OCI-LY7 (cell line): ENCODE measurements at regions of chr11 and their contacts with region 1.

Region 1: GRCh38 chr11:57667736-57668435 is at the start of gene ZDHHC5:
- DNase-seq: peak; percentile 99
- H3K4me3 ChIP-seq: peak within 1 kb of the TSS; percentile 94
- H3K27ac ChIP-seq: peak within 1 kb of the TSS; percentile 88
- H3K4me1 ChIP-seq: peaks cover 23% of the 10 kb centered on the region
- CTCF ChIP-seq: peak; percentile 34
- total RNA-seq, gene ZDHHC5: 23.4 and 27.5 TPM in 2 replicates

Region 2: DNA sequence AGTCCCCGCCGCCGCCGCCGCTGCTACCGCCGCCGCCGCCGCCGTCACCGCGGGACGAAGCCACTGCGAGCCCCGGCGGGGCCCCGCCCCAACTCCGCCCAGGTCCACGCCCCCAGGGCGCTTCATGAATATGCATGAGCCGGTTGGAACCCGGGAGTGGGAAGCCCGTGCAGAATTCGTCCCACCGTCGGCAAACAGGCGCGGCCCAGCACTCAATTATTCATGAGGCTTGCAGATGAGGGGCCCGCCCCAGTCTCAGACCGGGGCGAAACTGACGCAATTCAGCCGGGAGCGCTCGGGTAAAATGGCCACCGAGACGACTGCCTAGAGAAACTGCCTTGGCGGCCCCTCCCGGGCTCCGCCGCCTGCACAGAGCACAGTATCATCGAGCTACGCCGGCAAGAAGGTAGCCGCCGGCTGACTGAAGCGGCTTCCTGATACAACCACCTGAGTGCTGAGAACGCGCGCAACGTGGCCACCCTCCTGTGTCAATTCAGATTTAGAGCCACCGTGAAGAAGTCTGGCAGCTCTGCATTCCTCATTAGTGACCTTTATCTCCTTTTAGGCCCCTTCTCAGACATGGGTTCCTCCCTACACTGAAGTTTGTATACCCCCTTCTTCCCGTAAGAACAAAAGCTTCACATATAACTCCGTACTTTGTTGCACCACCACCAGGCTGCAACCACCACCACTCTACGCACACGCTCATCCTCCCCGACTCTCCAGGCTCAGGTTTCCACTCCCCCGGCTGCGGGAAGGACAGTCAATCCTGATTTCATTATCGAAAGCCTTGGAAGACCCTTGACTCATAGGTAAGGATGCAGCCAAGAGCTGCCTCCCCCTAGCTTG is 342.8 kb before region 1 on chr11 and contains the start of gene TNKS1BP1:
- CTCF ChIA-PET with region 1: no interaction called
- POLR2A ChIA-PET with region 1: no interaction called
- intact Hi-C with region 1: loop called (anchors 5 kb)
- DNase-seq: peak; percentile 96
- H3K4me3 ChIP-seq: peak within 1 kb of the TSS; percentile 70
- H3K27ac ChIP-seq: peak within 1 kb of the TSS; percentile 86
- H3K4me1 ChIP-seq: peaks cover 28% of the 10 kb centered on the region
- CTCF ChIP-seq: no peak
- total RNA-seq, gene TNKS1BP1: 5.3 and 6.4 TPM in 2 replicates

Region 3: DNA sequence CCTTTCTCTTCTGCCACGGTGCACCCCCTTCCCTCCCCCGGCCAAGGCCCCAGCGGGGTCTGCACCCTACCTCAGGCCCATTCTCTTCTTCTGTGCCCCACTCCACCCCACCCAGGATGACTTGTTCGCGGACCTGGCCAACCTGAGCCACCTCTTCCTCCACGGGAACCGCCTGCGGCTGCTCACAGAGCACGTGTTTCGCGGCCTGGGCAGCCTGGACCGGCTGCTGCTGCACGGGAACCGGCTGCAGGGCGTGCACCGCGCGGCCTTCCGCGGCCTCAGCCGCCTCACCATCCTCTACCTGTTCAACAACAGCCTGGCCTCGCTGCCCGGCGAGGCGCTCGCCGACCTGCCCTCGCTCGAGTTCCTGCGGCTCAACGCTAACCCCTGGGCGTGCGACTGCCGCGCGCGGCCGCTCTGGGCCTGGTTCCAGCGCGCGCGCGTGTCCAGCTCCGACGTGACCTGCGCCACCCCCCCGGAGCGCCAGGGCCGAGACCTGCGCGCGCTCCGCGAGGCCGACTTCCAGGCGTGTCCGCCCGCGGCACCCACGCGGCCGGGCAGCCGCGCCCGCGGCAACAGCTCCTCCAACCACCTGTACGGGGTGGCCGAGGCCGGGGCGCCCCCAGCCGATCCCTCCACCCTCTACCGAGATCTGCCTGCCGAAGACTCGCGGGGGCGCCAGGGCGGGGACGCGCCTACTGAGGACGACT is 191.7 kb before region 1 on chr11:
- CTCF ChIA-PET with region 1: no interaction called
- POLR2A ChIA-PET with region 1: no interaction called
- intact Hi-C with region 1: no loop called
- DNase-seq: no peak
- H3K4me3 ChIP-seq: no peak overlapping the region
- H3K27ac ChIP-seq: no peak overlapping the region
- H3K4me1 ChIP-seq: peaks cover 33% of the 10 kb centered on the region
- CTCF ChIP-seq: no peak

Region 4: DNA sequence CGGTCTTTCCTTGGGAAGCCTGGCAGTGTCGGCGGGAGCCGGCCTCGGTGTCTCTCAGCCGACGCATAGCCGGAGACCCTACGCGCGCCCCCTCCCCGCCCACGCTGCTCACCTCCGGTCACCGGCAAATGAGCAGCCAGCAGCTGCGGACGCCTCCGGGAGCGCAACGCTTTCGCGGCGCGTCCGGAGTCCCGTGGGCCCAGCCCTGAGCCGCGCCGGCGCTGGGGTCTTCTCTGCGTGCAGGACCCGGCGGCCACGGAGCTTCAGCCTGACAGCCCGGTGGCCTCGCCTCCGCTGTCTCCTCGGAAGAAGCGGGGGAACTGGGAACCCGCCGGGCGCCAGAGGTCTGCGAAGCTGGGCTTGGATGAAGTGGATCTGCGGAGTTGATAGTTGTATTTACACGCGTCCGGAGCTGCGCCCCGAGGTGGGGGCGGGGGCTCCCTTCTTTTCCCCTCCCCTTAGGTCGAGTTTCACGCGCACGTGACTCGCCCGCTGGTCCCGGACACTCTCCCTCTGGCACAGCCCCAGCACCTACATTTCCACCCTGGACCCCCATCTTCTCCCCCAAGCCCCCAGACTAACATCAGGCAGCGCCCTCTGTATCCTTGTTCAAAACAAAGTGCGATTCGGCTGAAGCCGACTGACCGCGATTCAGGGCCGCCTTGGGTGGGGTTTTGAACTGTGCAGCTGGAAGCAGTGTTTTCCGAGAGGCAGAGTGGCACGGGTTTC is 152.4 kb before region 1 on chr11 and contains the start of gene SLC43A1:
- CTCF ChIA-PET with region 1: no interaction called
- POLR2A ChIA-PET with region 1: interaction called, 5 read pairs
- intact Hi-C with region 1: loop called (anchors 5 kb)
- DNase-seq: peak; percentile 63
- H3K4me3 ChIP-seq: peak within 1 kb of the TSS; percentile 91
- H3K27ac ChIP-seq: peak within 1 kb of the TSS; percentile 65
- H3K4me1 ChIP-seq: peaks cover 43% of the 10 kb centered on the region
- CTCF ChIP-seq: 0 out of 2 replicates have a peak, but pooled peaks have one; percentile 31
- total RNA-seq, gene SLC43A1: 47.1 and 61.1 TPM in 2 replicates

Region 5: DNA sequence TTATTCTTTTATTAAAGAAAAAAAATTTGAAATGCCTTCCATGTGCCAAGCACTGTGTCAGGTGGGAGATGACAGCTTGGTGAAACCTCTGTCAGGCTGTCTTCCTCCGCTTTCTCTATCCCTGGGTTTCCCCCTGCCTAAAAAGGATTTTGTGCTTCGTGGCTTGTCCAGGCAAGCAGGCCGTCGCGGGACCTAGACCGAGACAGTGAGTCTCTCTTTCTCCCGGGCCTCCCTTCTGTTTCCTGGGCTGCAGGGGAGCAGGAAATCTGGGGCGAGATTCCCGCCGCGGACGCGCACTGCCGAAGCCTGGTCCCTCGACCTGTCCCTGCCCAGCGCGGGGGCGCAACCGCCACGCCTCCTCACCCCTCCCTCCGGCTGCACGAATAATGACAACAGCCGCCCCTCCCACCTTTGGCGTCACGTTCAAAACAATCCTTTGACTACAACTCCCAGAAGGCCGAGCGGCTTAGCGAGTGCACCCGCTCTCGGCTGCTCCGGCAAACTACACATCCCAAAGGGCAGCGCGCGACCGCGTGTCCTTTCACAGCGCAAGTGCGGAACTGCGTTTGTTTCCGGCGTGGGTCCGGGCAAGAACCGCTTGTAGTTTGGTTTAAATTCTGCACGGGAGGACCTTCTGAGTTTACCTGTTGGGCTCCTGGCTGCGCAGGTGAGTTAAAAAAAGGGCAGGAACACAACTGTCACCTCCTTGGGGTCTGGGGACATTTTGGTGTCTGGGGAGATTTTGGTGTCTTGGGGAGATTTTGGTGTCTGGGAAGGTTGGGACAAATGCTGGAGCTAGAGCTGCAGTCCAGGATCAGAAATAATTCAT is 10.5 kb before region 1 on chr11 and contains the start of gene CLP1:
- CTCF ChIA-PET with region 1: no interaction called
- POLR2A ChIA-PET with region 1: interaction called, 12 read pairs
- intact Hi-C with region 1: no loop called
- DNase-seq: peak; percentile 99
- H3K4me3 ChIP-seq: peak within 1 kb of the TSS; percentile 89
- H3K27ac ChIP-seq: peak within 1 kb of the TSS; percentile 40
- H3K4me1 ChIP-seq: peaks cover 10% of the 10 kb centered on the region
- CTCF ChIP-seq: no peak
- total RNA-seq, gene CLP1: 18.3 and 18.5 TPM in 2 replicates

Region 6: DNA sequence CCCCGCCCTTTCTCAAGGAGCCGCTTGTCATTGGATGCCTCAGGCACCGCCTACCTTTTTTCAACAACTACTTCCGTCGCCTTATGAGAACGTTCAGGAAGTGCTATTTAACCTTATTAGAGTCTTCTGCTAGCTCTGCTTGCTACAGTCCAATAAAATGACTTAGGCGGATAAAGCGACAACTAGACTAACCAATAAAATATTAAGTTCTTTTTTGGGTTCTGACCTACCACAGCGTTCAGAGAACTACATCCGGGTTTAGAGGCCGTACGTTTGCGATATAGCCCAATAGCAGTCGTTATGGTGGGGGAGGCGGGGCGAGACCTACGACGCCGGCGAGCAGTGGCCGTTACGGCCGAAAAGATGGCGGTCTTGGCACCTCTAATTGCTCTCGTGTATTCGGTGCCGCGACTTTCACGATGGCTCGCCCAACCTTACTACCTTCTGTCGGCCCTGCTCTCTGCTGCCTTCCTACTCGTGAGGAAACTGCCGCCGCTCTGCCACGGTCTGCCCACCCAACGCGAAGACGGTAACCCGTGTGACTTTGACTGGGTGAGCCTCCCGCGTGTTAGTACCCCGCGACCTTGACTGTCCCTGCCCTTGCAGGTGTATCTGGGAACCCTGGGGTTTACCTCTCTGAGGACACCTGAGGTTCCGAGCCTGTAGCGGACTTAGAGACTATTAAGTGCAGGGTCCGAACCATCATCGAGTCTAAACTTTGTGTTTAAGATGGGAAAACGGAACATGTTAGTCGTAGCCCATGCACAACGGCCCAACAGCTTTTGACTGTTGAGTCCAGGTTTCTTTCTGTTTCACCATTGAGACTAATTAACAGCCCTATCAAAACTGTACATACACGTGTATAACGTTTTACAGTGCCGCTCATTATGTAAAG is 44.6 kb after region 1 on chr11 and contains the start of gene TMX2:
- CTCF ChIA-PET with region 1: no interaction called
- POLR2A ChIA-PET with region 1: no interaction called
- intact Hi-C with region 1: loop called (anchors 1 kb)
- DNase-seq: peak; percentile 98
- H3K4me3 ChIP-seq: peak within 1 kb of the TSS; percentile 89
- H3K27ac ChIP-seq: peak within 1 kb of the TSS; percentile 82
- H3K4me1 ChIP-seq: peaks cover 28% of the 10 kb centered on the region
- CTCF ChIP-seq: no peak
- total RNA-seq, gene TMX2: 53.3 and 54.9 TPM in 2 replicates

Region 7: DNA sequence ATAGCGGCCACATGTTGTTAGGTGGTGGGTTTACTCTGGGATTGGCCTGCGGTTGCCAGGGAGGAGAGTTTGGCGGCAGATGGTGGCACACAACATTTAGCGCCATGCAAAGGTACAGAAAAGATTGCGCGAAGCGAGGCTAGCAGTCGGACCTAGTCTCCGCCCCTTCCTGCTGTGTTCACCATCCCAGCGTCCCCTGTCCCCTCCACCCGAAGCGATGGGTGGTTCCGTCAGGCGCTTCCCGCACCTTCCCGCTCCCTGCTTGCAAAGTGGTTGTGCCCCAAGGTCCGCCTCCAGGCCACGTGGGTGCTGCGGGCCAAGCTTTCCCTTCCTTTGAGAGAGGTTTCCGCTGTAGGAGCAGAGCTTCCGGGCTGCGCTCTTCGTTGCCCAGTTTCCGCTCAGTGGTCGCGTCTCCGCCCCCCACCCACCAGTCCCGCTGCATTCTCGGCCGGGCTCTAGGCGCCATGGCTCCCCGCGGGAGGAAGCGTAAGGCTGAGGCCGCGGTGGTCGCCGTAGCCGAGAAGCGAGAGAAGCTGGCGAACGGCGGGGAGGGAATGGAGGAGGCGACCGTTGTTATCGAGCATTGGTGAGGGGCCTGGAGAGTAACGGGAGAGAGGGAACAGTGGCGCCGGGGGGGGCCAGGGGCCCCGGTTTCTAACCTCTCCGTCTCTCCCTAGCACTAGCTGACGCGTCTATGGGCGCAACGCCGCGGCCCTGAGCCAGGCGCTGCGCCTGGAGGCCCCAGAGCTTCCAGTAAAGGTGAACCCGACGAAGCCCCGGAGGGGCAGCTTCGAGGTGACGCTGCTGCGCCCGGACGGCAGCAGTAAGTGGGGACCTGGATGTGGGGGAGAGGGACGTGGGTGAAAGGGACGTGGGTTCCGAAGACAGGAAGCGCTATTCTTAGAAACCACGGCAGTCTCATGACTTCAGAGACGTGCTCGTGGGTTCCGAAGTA is 73.5 kb after region 1 on chr11 and contains the start of gene SELENOH:
- CTCF ChIA-PET with region 1: no interaction called
- POLR2A ChIA-PET with region 1: interaction called, 3 read pairs
- intact Hi-C with region 1: loop called (anchors 2 kb)
- DNase-seq: peak; percentile 97
- H3K4me3 ChIP-seq: peak within 1 kb of the TSS; percentile 97
- H3K27ac ChIP-seq: peak within 1 kb of the TSS; percentile 77
- H3K4me1 ChIP-seq: peaks cover 20% of the 10 kb centered on the region
- CTCF ChIP-seq: no peak
- total RNA-seq, gene SELENOH: 181 and 229 TPM in 2 replicates

Region 8: DNA sequence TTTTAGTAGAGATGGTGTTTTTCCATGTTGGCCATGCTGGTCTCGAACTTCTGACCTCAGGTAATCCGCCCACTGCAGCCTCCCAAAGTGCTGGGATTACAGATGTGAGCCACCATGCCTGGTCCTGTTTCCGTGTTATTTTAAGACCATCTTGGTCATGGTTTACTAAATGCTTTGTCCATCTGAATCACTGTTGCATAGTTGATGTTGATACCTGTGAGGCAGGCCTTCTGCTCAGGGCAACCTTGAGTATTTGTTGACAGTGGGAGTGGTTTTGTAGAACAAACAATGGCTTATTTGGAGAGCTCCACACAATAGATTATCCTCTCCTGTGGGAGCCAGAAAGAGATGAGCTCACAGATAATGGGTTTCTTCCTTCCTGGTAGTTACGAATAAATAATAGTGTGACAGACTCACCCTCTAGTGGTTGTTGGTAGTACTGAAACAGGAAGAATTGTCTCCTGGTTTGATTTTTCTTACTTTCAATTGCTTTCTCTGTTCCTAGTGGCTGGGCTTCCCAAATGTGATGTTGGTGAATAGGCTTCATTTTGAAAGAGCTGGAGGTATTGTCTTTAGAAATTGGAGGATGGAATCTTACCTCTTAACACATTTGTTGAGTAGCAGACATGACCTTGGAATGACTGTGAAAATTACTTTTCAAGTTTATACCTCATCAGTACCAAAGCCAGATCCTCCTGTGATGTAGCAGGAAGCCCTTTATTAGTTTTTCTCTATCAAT is 132.7 kb after region 1 on chr11:
- CTCF ChIA-PET with region 1: no interaction called
- POLR2A ChIA-PET with region 1: interaction called, 4 read pairs
- intact Hi-C with region 1: loop called (anchors 2 kb)
- DNase-seq: peak; percentile 74
- H3K4me3 ChIP-seq: no peak overlapping the region
- H3K27ac ChIP-seq: no peak overlapping the region
- H3K4me1 ChIP-seq: peaks cover 12% of the 10 kb centered on the region
- CTCF ChIP-seq: peak; percentile 94